Mammary epithelial cell (primary cell): ENCODE measurements at regions of chr13 and their contacts with region 1.

Region 1: GRCh38 chr13:30132623-30133553 is 174.5 kb downstream of the KATNAL1 start:
- DNase-seq: peak; percentile 74
- H3K4me3 ChIP-seq: no peak overlapping the region
- H3K27ac ChIP-seq: no peak overlapping the region
- H3K4me1 ChIP-seq: peaks cover 3% of the 10 kb centered on the region
- H3K27me3 ChIP-seq: no peaks in the 10 kb centered on the region
- CTCF ChIP-seq: peak; percentile 63 to 89

Region 2: GRCh38 chr13:30158774-30159445 is 26.0 kb after region 1 on chr13:
- CTCF ChIA-PET with region 1: interaction called, 11 read pairs
- dilution Hi-C with region 1: no loop called
- in situ Hi-C with region 1: no loop called
- intact Hi-C with region 1: loop called (anchors 1 kb)
- DNase-seq: no peak
- H3K4me3 ChIP-seq: no peak overlapping the region
- H3K27ac ChIP-seq: no peak overlapping the region
- H3K4me1 ChIP-seq: no peaks in the 10 kb centered on the region
- H3K27me3 ChIP-seq: no peaks in the 10 kb centered on the region
- CTCF ChIP-seq: peak; percentile 32 to 49

Region 3: GRCh38 chr13:30257468-30258099 is 124.7 kb after region 1 on chr13:
- CTCF ChIA-PET with region 1: no interaction called
- dilution Hi-C with region 1: no loop called
- in situ Hi-C with region 1: no loop called
- intact Hi-C with region 1: loop called (anchors 5 kb)
- DNase-seq: no peak
- H3K4me3 ChIP-seq: no peak overlapping the region
- H3K27ac ChIP-seq: no peak overlapping the region
- H3K4me1 ChIP-seq: no peaks in the 10 kb centered on the region
- H3K27me3 ChIP-seq: no peaks in the 10 kb centered on the region
- CTCF ChIP-seq: no peak

Region 4: GRCh38 chr13:30334663-30335386 is 201.9 kb after region 1 on chr13:
- CTCF ChIA-PET with region 1: no interaction called
- dilution Hi-C with region 1: no loop called
- in situ Hi-C with region 1: no loop called
- intact Hi-C with region 1: loop called (anchors 2 kb)
- DNase-seq: no peak
- H3K4me3 ChIP-seq: no peak overlapping the region
- H3K27ac ChIP-seq: no peak overlapping the region
- H3K4me1 ChIP-seq: peaks cover 11% of the 10 kb centered on the region
- H3K27me3 ChIP-seq: no peaks in the 10 kb centered on the region
- CTCF ChIP-seq: peak; percentile 53 to 58

Region 5: DNA sequence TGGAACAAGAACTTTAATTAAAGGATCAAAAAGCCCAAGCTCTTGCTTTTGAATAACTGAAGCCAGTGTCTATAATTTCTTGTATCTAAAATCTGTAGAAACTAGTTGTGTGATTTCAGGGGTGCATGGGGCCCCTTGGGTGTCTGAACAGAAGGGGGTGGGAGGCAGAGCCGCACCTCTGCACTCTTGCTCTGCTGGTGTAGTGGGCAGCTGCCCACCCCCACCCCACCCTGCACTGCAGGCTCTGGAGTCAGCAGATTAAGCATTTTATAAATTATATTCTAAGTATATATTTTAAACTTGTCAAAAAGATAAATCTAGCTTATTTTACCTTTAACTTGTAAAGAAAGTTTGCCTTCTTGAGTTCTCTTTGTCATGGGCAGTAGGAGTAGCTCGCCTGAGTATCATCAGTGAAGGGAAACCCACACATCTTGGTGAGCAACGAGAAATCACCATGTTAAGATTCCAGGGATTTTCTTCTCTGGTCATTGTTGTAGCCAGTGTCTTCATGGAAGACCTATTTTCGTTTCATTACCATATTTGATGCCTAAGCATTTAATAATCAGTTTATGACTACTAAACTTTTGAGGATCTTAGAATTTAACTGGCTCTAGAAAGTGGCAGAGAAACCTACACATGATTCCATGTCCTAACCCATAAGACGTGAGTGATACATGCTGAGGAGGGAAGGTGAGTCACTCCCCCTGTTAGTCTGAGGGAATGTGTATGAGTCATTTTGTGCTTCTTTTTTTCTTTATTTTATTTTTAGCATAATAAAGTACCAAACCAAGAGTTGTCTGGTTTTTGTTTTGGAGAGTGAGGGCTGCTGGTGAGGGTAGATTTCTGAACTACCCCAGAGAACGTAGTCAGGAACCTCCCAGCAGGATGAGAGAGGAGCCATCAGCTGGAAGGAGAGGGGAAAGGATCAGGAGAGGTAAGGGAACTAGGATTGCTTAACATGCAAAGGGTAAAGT is 297.1 kb after region 1 on chr13:
- CTCF ChIA-PET with region 1: no interaction called
- dilution Hi-C with region 1: no loop called
- in situ Hi-C with region 1: loop called in 1 of 2 experiments (anchors 25 kb)
- intact Hi-C with region 1: no loop called
- DNase-seq: peak; percentile 91
- H3K4me3 ChIP-seq: peak overlapping the region in 1 of 3 experiments; percentile 18
- H3K27ac ChIP-seq: peak overlapping the region; percentile 71
- H3K4me1 ChIP-seq: peaks cover 35% of the 10 kb centered on the region
- H3K27me3 ChIP-seq: no peaks in the 10 kb centered on the region
- CTCF ChIP-seq: no peak

Region 6: DNA sequence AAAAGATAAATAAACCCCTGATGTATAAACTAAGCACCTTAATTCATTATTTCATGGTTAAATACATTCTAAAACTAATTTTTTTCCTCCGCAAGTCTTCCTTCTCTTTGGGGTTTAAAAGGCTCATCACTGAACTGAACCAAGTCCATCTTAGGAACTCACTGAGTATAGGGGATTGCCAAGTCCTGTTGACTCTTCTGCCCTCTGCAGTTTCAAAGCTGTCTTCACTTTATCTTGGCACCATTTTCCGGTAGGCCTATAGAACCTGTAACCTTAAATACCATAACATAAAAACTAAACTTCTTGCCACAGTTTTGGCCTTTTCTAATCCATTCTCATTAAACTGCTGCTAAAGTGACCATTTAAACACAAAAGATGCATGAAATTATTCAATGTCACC is 418.3 kb after region 1 on chr13:
- CTCF ChIA-PET with region 1: interaction called, 3 read pairs
- dilution Hi-C with region 1: no loop called
- in situ Hi-C with region 1: no loop called
- intact Hi-C with region 1: loop called (anchors 1 kb)
- DNase-seq: peak; percentile 24
- H3K4me3 ChIP-seq: no peak overlapping the region
- H3K27ac ChIP-seq: no peak overlapping the region
- H3K4me1 ChIP-seq: no peaks in the 10 kb centered on the region
- H3K27me3 ChIP-seq: no peaks in the 10 kb centered on the region
- CTCF ChIP-seq: peak; percentile 28 to 56

Region 7: DNA sequence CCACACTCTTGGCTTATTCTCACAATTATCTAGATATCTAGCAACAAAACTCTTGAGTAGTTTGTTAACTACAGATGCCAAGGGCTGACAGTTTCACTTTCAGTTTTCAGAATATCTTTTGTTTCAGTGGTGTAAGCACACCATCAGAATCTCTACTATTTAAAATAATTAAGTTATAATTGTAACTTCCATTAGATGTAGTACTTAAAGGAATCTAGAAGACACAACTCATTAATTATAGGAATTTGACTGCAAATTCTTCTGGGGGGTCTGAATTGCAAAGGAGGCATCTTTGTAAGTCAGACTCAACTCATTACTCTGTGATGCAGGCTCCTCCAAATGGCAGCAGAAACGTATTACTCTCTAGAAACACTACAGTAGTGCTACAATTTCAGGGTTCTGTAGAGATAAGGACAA is 440.0 kb after region 1 on chr13:
- CTCF ChIA-PET with region 1: no interaction called
- dilution Hi-C with region 1: no loop called
- in situ Hi-C with region 1: no loop called
- intact Hi-C with region 1: loop called (anchors 2 kb)
- DNase-seq: peak; percentile 37
- H3K4me3 ChIP-seq: peak overlapping the region; percentile 31 to 53 (median 46)
- H3K27ac ChIP-seq: peak overlapping the region; percentile 71
- H3K4me1 ChIP-seq: peaks cover 35% of the 10 kb centered on the region
- H3K27me3 ChIP-seq: no peaks in the 10 kb centered on the region
- CTCF ChIP-seq: peak in 1 of 2 donors; percentile 33